ENCODE measurements at regions of chr2 and their contacts with region 1.

Region 1: GRCh38 chr2:10434886-10435819 is 13.0 kb downstream of the ODC1 start:
- DNase-seq: peak; percentile 84 to 92
- H3K4me3 ChIP-seq: no peak overlapping the region
- H3K4me3 Mint-ChIP-seq: no peak overlapping the region
- H3K27ac Mint-ChIP-seq: peak overlapping the region; percentile 19
- H3K4me1 ChIP-seq: peaks cover 18% of the 10 kb centered on the region
- H3K4me1 Mint-ChIP-seq: peaks cover 8% of the 10 kb centered on the region
- H3K27me3 ChIP-seq: no peaks in the 10 kb centered on the region
- H3K27me3 Mint-ChIP-seq: no peaks in the 10 kb centered on the region
- CTCF ChIP-seq: peak; percentile 97 to 98

Region 2: DNA sequence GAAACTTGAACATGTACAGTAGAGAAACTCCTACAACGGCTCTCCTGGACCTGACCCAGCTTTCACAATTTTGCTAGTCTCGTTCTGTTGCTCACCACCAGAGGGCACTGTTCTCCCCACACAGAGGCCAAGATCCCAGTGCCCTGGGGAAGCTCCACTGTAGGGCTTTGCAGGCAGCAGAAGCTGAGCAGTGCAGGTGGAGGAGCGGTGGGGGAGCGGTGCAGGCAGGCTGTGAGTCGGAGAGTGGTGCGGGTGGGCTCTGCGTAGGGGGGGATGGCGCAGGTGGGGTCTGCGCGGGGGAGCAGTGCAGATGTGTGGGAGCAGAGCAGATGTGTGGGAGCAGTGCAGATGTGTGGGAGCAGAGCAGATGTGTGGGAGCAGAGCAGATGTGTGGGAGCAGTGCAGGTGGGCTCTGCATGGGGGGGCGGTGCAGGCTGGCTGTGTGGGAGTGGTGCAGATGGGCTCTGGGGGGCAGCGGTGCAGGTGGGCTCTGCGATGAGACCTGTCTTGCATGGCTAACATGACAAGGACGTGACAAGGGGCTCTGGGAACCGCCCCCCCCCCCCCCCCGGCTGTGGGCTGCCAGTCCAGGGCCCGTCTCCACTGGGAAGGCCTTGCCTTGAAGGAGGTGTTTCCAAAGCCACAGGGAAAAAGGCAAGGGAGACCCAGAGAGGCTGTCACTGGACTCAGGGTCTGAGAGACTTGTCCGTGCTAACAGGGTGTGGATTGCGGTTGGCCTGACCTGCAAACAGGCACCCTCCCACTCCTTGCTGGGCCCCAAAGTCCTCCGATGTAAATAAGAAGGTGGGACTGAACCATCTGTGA is 362.3 kb before region 1 on chr2:
- CTCF ChIA-PET with region 1: interaction called, 69 read pairs
- POLR2A ChIA-PET with region 1: interaction called, 7 read pairs
- intact Hi-C with region 1: loop called (anchors 1 kb)
- DNase-seq: peak; percentile 90
- H3K4me3 ChIP-seq: no peak overlapping the region
- H3K4me3 Mint-ChIP-seq: no peak overlapping the region
- H3K27ac Mint-ChIP-seq: no peak overlapping the region
- H3K4me1 ChIP-seq: no peaks in the 10 kb centered on the region; the same call in 1 of the 2 replicates
- H3K4me1 Mint-ChIP-seq: peaks cover 6% of the 10 kb centered on the region
- H3K27me3 ChIP-seq: no peaks in the 10 kb centered on the region
- H3K27me3 Mint-ChIP-seq: peaks cover 15% of the 10 kb centered on the region
- CTCF ChIP-seq: peak; percentile 91 to 92

Region 3: GRCh38 chr2:10141736-10142642 is 293.2 kb before region 1 on chr2:
- CTCF ChIA-PET with region 1: interaction called, 7 read pairs
- POLR2A ChIA-PET with region 1: no interaction called
- intact Hi-C with region 1: loop called (anchors 5 kb)
- DNase-seq: peak in 1 of 2 experiments; percentile 56
- H3K4me3 ChIP-seq: no peak overlapping the region
- H3K4me3 Mint-ChIP-seq: no peak overlapping the region
- H3K27ac Mint-ChIP-seq: peak overlapping the region; percentile 23
- H3K4me1 ChIP-seq: 0 out of 2 replicates have a peak, but pooled peaks cover 5% of the 10 kb centered on the region
- H3K4me1 Mint-ChIP-seq: no peaks in the 10 kb centered on the region
- H3K27me3 ChIP-seq: no peaks in the 10 kb centered on the region
- H3K27me3 Mint-ChIP-seq: no peaks in the 10 kb centered on the region
- CTCF ChIP-seq: peak; percentile 45 to 62

Region 4: DNA sequence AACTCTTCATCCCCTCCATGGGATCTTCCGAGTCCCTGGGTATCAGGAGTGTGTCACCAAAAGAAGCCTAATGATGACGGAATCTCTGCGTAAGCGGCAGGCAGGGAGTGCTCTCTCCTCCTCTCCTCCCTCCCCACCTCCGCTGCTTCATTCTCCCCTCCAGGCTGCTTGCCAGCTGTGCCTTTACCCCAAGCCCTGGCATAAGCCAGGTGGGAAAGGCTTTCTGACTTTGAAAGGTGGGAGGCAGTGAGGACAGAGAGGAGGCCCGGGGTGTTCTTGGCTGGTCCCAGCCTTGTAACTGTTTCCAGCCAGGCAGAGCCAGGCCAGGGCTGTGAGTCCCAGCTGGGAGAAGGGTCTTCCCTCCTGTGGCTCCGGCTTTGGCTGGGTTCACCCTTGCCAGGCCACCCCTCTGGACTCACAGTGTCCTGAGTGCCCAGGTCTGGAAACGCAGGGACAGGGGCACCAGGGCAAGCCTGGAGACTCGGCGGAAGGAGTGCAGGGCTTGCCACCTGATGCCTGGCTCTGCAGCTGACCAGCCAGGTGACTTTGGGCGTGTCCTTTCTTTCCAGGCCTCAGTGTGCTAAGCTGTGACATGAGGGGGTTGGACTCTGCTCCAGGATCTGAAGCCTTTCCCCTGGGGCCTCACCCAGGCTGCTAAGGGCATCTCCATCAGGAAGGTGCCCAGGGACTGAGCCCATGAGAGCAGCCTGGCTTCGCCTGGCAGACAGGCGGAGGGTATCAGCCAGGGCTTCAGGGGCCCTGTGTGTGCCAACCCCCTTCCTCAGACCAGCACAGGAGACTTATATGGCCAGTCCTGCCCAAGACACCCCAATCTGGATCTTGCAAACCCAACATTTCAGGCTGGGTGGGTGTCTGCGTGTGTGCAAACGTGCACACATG is 165.2 kb before region 1 on chr2:
- CTCF ChIA-PET with region 1: interaction called, 16 read pairs
- POLR2A ChIA-PET with region 1: no interaction called
- intact Hi-C with region 1: loop called (anchors 10 kb)
- DNase-seq: peak in 1 of 2 experiments; percentile 21
- H3K4me3 ChIP-seq: no peak overlapping the region
- H3K4me3 Mint-ChIP-seq: no peak overlapping the region
- H3K27ac Mint-ChIP-seq: peak overlapping the region; percentile 55
- H3K4me1 ChIP-seq: peaks cover 14% of the 10 kb centered on the region
- H3K4me1 Mint-ChIP-seq: peaks cover 12% of the 10 kb centered on the region
- H3K27me3 ChIP-seq: no peaks in the 10 kb centered on the region
- H3K27me3 Mint-ChIP-seq: no peaks in the 10 kb centered on the region
- CTCF ChIP-seq: no peak

Region 5: GRCh38 chr2:10331027-10331701 is 104.0 kb before region 1 on chr2:
- CTCF ChIA-PET with region 1: interaction called, 10 read pairs
- POLR2A ChIA-PET with region 1: no interaction called
- intact Hi-C with region 1: no loop called
- DNase-seq: no peak
- H3K4me3 ChIP-seq: no peak overlapping the region
- H3K4me3 Mint-ChIP-seq: no peak overlapping the region
- H3K27ac Mint-ChIP-seq: peak overlapping the region; percentile 77
- H3K4me1 ChIP-seq: peaks cover 39% of the 10 kb centered on the region
- H3K4me1 Mint-ChIP-seq: peaks cover 39% of the 10 kb centered on the region
- H3K27me3 ChIP-seq: no peaks in the 10 kb centered on the region
- H3K27me3 Mint-ChIP-seq: no peaks in the 10 kb centered on the region
- CTCF ChIP-seq: no peak

Region 6: GRCh38 chr2:10360851-10361588 is 74.1 kb before region 1 on chr2:
- CTCF ChIA-PET with region 1: no interaction called
- POLR2A ChIA-PET with region 1: no interaction called
- intact Hi-C with region 1: no loop called
- DNase-seq: no peak
- H3K4me3 ChIP-seq: no peak overlapping the region
- H3K4me3 Mint-ChIP-seq: no peak overlapping the region
- H3K27ac Mint-ChIP-seq: peak overlapping the region; percentile 2
- H3K4me1 ChIP-seq: peaks cover 7% of the 10 kb centered on the region; the same call in 1 of the 2 replicates
- H3K4me1 Mint-ChIP-seq: peaks cover 7% of the 10 kb centered on the region
- H3K27me3 ChIP-seq: no peaks in the 10 kb centered on the region
- H3K27me3 Mint-ChIP-seq: no peaks in the 10 kb centered on the region
- CTCF ChIP-seq: no peak

Region 7: DNA sequence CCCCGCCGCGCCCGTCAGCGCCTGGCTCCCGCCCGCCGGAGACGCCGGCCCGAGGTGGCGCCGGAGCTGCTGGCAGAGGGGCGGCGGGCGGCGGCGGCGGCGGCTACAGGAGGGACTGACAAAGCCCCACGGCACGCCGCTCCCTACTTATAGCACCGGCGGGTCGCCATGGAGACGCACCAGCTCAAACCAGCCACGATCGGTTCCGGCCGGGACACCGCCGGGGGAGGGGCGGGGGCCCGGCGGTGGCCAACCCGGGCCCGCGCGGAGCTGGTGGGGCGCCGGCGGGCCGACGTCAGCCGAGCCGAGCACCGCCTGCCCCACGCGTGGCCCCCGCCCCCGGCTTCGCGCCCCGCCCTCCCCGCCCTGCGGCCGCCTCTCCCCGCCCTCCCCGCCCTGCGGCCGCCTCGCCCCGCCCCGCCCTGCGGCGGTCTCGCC is 13.1 kb after region 1 on chr2 and contains the start of gene ODC1:
- CTCF ChIA-PET with region 1: interaction called, 17 read pairs
- POLR2A ChIA-PET with region 1: interaction called, 15 read pairs
- intact Hi-C with region 1: no loop called
- DNase-seq: peak; percentile 98 to 99
- H3K4me3 ChIP-seq: peak within 1 kb of the TSS; percentile 97
- H3K4me3 Mint-ChIP-seq: peak within 1 kb of the TSS; percentile 84
- H3K27ac Mint-ChIP-seq: peak within 1 kb of the TSS; percentile 87
- H3K4me1 ChIP-seq: peaks cover 17% of the 10 kb centered on the region
- H3K4me1 Mint-ChIP-seq: peaks cover 17% of the 10 kb centered on the region
- H3K27me3 ChIP-seq: no peaks in the 10 kb centered on the region
- H3K27me3 Mint-ChIP-seq: no peaks in the 10 kb centered on the region
- CTCF ChIP-seq: no peak
- total RNA-seq, gene ODC1: 277 and 285 TPM in 2 replicates

Region 8: GRCh38 chr2:10832203-10832936 is 397.2 kb after region 1 on chr2:
- CTCF ChIA-PET with region 1: no interaction called
- POLR2A ChIA-PET with region 1: no interaction called
- intact Hi-C with region 1: no loop called
- DNase-seq: peak; percentile 85 to 92
- H3K4me3 ChIP-seq: no peak overlapping the region
- H3K4me3 Mint-ChIP-seq: no peak overlapping the region
- H3K27ac Mint-ChIP-seq: no peak overlapping the region
- H3K4me1 ChIP-seq: no peaks in the 10 kb centered on the region
- H3K4me1 Mint-ChIP-seq: no peaks in the 10 kb centered on the region
- H3K27me3 ChIP-seq: no peaks in the 10 kb centered on the region
- H3K27me3 Mint-ChIP-seq: peaks cover 15% of the 10 kb centered on the region
- CTCF ChIP-seq: peak; percentile 98

Measured in Caco-2 (cell line).